ENCODE measurements at regions of chr11 and their contacts with region 1.

Region 1: GRCh38 chr11:93741094-93741881 is at the starts of genes C11orf54 and TAF1D:
- DNase-seq: peak; percentile 96
- H3K4me3 Mint-ChIP-seq: peak within 1 kb of the TSS; percentile 100
- H3K27ac Mint-ChIP-seq: peak within 1 kb of the TSS; percentile 99
- H3K4me1 Mint-ChIP-seq: peaks cover 53% of the 10 kb centered on the region
- H3K27me3 Mint-ChIP-seq: no peaks in the 10 kb centered on the region
- total RNA-seq, gene C11orf54: 19.3 and 21.6 TPM in 2 replicates
- total RNA-seq, gene TAF1D: 337 and 345 TPM in 2 replicates

Region 2: DNA sequence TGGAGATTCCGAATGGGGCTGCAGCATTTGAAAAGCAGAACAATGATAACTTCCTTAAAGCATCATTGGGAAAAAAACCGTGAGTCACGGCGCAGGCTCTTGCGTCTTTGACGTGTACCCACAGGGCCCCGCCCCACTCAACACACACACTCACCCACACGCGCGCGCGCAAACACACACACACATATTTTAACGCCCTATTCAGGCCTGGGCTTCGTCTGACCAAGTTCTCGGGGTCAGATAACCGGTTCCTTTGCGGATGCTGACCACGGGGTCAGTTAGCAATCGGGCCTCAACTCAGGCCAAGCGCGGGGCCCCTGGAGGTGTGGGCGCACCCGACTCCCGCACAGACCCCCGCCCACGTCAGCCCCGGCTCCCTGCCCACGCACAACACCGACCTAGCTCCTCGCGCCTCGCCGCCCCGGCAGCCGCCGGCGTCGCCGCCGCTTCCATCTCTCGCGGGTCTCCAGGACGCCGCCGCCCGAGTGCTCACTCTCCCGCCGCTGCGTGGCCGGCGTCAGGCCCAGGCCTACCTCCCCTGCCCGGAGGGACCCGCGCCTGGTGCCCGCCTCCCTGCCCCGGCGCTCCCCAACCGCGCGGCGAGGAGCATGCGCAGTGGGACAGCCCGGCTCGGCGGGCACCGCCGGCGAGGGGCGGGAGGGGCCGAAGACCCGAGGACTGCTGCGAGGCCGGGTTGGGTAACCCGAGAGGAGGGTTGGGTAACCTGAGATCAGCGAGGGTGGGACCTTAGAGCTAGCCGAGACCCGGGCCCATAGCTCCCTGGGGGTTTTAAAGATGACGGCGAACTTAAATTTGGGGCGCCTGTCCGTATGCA is 543.7 kb before region 1 on chr11 and contains the start of gene SLC36A4:
- intact Hi-C with region 1: loop called (anchors 1 kb)
- DNase-seq: peak; percentile 80
- H3K4me3 Mint-ChIP-seq: peak within 1 kb of the TSS; percentile 97
- H3K27ac Mint-ChIP-seq: peak within 1 kb of the TSS; percentile 97
- H3K4me1 Mint-ChIP-seq: peaks cover 13% of the 10 kb centered on the region
- H3K27me3 Mint-ChIP-seq: peaks cover 13% of the 10 kb centered on the region
- total RNA-seq, gene SLC36A4: 16.9 and 17.1 TPM in 2 replicates

Region 3: GRCh38 chr11:93662177-93662575 is 79.1 kb before region 1 on chr11:
- intact Hi-C with region 1: loop called (anchors 1 kb)
- DNase-seq: no peak
- H3K4me3 Mint-ChIP-seq: peak overlapping the region; percentile 89
- H3K27ac Mint-ChIP-seq: peak overlapping the region; percentile 86
- H3K4me1 Mint-ChIP-seq: peaks cover 47% of the 10 kb centered on the region
- H3K27me3 Mint-ChIP-seq: no peaks in the 10 kb centered on the region

Region 4: DNA sequence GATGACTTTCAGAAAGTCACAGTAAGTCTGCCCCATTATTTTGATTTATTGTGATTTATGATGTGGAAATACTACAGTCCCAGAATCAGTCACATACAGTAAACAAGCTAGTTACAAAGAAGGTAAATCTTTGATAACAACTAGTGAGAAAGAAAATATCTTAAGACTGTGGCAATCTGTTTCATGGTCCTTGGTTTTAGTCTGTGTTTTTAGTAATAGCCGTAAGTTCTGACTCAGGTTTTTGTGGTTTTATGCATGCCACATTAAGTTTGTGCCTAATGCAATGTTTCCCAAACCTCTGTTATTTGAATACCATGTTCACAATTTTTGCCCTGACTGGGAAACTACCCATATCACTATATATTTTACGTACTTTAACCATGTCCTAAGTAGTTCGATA is 73.1 kb before region 1 on chr11:
- intact Hi-C with region 1: loop called (anchors 2 kb)
- DNase-seq: no peak
- H3K4me3 Mint-ChIP-seq: no peak overlapping the region
- H3K27ac Mint-ChIP-seq: peak overlapping the region; percentile 15
- H3K4me1 Mint-ChIP-seq: peaks cover 47% of the 10 kb centered on the region
- H3K27me3 Mint-ChIP-seq: no peaks in the 10 kb centered on the region

Region 5: DNA sequence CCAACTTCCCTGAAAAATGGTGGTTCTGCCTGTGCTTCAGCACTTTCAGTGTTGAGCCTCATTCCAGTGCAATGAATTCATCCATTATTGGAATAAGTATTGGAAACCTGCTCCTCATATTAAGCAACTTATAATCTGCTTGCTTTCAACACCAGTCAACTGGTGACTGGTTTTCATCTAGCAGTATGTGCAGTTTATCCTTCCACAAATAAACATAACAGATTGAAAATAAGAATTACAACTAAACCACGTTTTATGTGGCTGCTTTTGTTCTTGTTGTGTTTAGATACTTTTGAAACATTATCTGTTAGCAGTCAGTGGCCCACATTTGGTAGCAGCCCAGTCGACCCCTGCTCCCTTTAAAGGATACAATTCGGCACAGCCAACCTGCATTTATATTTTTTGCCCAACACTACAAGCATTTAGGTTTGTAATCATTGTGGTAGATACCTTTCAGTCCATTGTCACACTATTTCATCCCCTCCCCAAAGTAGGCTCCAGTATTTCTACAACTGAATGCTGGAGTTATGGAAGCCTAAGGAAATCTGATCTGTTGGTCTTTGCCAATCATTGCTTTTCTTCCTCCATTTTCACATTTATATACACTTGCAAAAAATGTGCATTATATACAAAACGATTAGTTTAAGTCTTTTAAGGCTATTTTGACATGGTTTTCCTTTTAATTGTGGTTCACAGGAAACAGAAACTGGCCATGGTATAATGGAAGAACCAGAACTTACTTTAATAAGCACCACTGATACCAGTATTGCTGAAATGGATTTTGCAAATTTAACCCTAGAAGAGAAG is 13.1 kb before region 1 on chr11:
- intact Hi-C with region 1: loop called (anchors 1 kb)
- DNase-seq: no peak
- H3K4me3 Mint-ChIP-seq: no peak overlapping the region
- H3K27ac Mint-ChIP-seq: peak overlapping the region; percentile 25
- H3K4me1 Mint-ChIP-seq: peaks cover 42% of the 10 kb centered on the region
- H3K27me3 Mint-ChIP-seq: no peaks in the 10 kb centered on the region

Region 6: DNA sequence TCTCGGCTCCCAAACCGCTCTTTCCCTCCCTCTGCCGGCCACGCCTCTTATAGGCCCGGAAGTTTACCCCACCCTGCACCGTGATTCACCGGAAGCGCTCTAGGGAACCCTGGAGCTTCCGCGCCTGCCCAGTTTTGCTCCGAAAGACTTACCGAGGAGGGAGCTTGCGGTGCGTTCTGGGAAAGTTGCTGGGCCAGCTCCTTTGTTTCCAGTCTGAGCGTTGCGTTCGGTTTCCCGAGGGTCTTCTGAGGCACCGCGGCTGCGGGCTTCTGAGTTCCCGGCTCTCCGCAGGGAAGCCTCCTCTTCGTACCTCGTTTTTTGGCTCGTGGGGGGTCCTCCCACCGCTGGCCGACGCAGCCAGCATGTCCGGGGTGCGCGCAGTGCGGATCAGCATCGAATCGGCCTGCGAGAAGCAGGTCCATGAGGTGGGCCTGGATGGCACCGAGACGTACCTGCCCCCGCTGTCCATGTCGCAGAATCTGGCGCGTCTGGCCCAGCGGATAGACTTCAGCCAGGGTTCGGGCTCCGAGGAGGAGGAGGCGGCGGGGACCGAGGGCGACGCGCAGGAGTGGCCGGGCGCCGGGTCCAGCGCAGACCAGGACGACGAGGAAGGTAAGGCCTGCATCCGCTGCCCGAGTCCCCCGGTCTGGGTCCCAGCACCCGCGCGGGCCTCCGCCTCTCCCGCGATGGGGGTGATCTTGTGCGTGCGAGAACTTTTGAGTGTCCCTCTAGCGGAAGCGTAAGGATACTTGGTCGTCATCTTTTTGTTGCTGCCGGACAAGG is 43.1 kb after region 1 on chr11 and contains the start of gene MED17:
- intact Hi-C with region 1: loop called (anchors 1 kb)
- DNase-seq: peak; percentile 87
- H3K4me3 Mint-ChIP-seq: peak within 1 kb of the TSS; percentile 93
- H3K27ac Mint-ChIP-seq: peak within 1 kb of the TSS; percentile 88
- H3K4me1 Mint-ChIP-seq: peaks cover 45% of the 10 kb centered on the region
- H3K27me3 Mint-ChIP-seq: no peaks in the 10 kb centered on the region
- total RNA-seq, gene MED17: 55.8 and 59.4 TPM in 2 replicates

Region 7: GRCh38 chr11:93986716-93987115 is 245.4 kb after region 1 on chr11:
- intact Hi-C with region 1: no loop called
- DNase-seq: no peak
- H3K4me3 Mint-ChIP-seq: no peak overlapping the region
- H3K27ac Mint-ChIP-seq: no peak overlapping the region
- H3K4me1 Mint-ChIP-seq: no peaks in the 10 kb centered on the region
- H3K27me3 Mint-ChIP-seq: peaks cover 2% of the 10 kb centered on the region

Region 8: GRCh38 chr11:94128746-94129511 is 387.6 kb after region 1 on chr11 and contains the start of gene PANX1:
- intact Hi-C with region 1: loop called (anchors 2 kb)
- DNase-seq: peak; percentile 73
- H3K4me3 Mint-ChIP-seq: no peak within 1 kb of the TSS
- H3K27ac Mint-ChIP-seq: peak within 1 kb of the TSS; percentile 88
- H3K4me1 Mint-ChIP-seq: peaks cover 20% of the 10 kb centered on the region
- H3K27me3 Mint-ChIP-seq: no peaks in the 10 kb centered on the region
- total RNA-seq, gene PANX1: 20.8 and 21.9 TPM in 2 replicates